Psoas muscle (tissue), 8 donors: ENCODE measurements at regions of chr3 and their contacts with region 1.

Region 1: DNA sequence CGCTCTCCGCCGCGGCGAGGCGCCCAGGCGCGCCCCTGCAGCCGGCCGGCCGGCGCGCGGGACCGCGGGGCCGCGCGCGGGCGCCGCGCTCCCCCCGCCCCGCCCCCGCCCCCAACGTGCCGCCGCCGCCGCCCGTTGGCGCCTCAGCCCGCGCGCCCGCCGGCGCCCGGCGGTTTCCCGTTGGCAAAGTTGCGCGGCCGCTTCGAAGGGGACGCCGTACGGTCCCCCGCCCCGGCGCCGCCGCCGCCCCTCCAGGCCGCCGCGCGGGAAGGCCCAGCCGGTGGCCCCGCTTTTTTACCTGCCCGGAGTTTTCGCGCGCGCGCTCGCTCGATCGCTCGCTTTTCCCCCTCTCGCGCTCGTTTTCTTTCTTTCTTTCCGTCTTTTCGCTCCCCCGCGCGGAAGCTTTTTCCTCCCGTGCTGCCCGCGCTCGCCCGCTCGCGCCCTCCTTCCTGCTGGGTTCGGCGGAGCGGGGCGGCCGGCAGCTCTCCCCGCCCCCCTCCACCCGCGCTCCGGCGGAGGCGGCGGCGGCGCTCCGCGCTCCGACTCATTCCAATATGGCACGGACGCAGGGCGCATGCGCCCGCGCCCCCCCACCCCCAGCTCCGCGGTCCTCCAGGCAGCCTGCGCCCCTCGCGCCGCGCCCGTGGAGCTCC is at the start of gene SFMBT1:
- DNase-seq: peak; percentile 72 to 86
- ATAC-seq: peak; percentile 69 to 80 (median 78)
- H3K4me3 ChIP-seq: peak within 1 kb of the TSS; percentile 92
- H3K27ac ChIP-seq: peak within 1 kb of the TSS; percentile 93
- H3K4me1 ChIP-seq: peaks cover 26% of the 10 kb centered on the region
- H3K27me3 ChIP-seq: no peaks in the 10 kb centered on the region
- CTCF ChIP-seq: no peak
- total RNA-seq, gene SFMBT1: 16.0 to 25.0 (median 16.8) TPM

Region 2: DNA sequence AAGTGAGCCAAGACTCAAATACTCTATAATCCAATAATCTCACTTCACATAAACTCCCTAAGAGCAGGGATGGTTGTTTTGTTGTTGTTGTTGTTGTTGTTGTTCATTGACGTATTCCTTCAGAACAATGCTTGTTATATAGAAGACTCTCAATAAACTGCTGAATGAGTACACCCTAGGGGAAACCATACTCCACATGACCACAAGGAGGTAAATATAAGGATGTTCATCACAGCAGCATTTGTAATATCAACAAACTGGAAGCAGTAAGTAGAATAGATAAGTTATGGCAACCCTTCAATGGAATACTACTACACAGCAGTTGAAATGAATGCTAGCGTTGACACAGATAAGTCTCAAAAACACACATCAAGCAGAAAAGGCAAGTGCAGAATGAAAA is 85.9 kb before region 1 on chr3:
- intact Hi-C with region 1: no loop called
- DNase-seq: no peak
- ATAC-seq: no peak
- H3K4me3 ChIP-seq: no peak overlapping the region
- H3K27ac ChIP-seq: no peak overlapping the region
- H3K4me1 ChIP-seq: no peaks in the 10 kb centered on the region
- H3K27me3 ChIP-seq: no peaks in the 10 kb centered on the region
- CTCF ChIP-seq: no peak

Region 3: DNA sequence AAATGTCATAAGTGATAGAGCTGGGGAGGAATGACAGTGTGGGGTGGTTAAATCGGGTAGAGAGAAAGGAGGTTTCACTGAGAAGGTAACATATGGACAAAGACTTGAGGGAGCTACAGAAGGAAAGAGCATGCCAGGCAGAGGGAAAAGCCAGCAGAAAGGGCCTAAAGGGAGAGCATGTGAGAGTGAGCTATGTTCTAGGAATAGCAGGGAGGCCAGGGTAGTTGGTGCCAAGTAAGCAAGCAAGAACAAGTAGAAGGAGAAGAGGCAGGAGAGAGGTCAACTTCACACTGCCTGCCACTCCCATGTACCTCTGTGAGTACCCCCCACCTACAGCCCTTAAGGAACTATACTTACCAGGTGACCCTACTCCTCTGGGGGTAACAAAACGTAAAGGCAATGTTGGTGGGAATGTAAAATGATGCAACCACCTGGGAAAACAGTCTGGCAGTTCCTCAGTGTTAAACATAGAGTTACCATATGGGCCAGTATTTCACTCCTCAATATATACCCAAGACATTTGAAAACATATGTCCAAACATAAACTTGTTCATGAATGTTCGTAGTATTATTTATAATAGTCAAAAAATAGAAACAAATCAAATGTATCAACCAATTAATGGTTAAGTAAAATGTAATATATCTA is 67.4 kb before region 1 on chr3:
- intact Hi-C with region 1: loop called in 1 of 2 experiments (anchors 5 kb)
- DNase-seq: no peak
- ATAC-seq: peak; percentile 91 to 97 (median 96)
- H3K4me3 ChIP-seq: peak overlapping the region; percentile 47
- H3K27ac ChIP-seq: peak overlapping the region; percentile 90
- H3K4me1 ChIP-seq: peaks cover 17% of the 10 kb centered on the region
- H3K27me3 ChIP-seq: no peaks in the 10 kb centered on the region
- CTCF ChIP-seq: no peak

Region 4: DNA sequence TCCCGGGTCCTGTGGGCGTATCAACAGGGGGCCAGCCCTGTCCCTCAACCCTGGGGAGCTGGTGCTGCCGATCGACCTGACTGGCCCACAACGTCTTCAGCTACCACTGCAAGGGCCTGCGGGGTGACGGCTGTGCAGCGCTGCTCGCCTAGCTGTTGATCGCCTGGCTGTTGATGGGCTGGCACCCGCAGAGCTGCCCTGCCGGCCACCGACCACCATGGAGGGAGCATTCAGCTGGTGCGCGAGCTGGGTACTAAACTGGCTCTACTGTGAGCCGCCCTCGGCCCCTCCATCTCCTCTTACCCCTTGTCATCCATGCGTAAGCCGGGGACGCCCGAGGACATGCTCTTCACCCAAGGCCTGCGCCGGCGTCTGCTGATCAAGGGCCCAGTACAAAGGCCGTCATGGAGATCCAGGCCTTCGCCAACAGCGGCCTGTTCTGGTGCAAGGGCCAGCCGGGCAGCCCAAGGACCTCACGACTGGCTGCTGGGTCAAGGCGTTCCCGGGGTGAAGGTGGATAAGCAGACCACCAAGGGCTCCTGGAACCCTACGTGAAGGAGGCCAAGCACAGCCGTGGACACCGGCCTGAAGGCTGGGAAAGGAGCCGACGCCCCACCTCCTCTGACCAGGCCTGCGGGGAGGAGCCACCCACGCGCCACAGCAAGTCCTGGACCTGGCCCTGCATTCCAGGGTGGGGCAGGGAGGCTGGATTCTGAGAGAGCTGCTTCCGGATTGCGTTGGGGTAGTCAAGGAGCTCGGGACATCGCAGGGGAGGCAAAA is 46.7 kb before region 1 on chr3:
- intact Hi-C with region 1: no loop called
- DNase-seq: no peak
- ATAC-seq: peak in 1 of 4 donors; percentile 25
- H3K4me3 ChIP-seq: no peak overlapping the region
- H3K27ac ChIP-seq: no peak overlapping the region
- H3K4me1 ChIP-seq: no peaks in the 10 kb centered on the region
- H3K27me3 ChIP-seq: no peaks in the 10 kb centered on the region
- CTCF ChIP-seq: no peak

Region 5: DNA sequence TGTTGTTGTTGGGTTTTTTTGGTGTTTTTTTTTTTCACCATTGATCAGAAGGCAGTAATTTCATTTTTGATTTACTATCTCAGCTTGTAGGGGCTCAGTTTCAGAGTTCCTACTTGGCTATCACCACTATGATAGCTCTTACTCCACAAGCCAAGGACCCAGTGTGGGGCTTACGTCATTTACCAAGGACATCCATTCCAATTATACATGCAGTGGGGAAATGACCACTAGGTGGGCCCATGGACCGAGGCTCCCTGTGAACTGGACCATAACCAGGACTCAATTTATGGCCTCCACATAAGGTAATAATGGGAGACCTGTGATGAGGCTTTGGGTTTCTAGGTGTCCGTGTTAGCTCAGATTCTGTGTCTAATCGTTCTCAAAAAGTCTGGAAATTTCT is 381.3 kb after region 1 on chr3:
- intact Hi-C with region 1: no loop called
- DNase-seq: no peak
- ATAC-seq: no peak
- H3K4me3 ChIP-seq: no peak overlapping the region
- H3K27ac ChIP-seq: no peak overlapping the region
- H3K4me1 ChIP-seq: no peaks in the 10 kb centered on the region
- H3K27me3 ChIP-seq: no peaks in the 10 kb centered on the region
- CTCF ChIP-seq: no peak